Ascending aorta (tissue), 2 donors: ENCODE measurements at regions of chr18 and their contacts with region 1.

Region 1: DNA sequence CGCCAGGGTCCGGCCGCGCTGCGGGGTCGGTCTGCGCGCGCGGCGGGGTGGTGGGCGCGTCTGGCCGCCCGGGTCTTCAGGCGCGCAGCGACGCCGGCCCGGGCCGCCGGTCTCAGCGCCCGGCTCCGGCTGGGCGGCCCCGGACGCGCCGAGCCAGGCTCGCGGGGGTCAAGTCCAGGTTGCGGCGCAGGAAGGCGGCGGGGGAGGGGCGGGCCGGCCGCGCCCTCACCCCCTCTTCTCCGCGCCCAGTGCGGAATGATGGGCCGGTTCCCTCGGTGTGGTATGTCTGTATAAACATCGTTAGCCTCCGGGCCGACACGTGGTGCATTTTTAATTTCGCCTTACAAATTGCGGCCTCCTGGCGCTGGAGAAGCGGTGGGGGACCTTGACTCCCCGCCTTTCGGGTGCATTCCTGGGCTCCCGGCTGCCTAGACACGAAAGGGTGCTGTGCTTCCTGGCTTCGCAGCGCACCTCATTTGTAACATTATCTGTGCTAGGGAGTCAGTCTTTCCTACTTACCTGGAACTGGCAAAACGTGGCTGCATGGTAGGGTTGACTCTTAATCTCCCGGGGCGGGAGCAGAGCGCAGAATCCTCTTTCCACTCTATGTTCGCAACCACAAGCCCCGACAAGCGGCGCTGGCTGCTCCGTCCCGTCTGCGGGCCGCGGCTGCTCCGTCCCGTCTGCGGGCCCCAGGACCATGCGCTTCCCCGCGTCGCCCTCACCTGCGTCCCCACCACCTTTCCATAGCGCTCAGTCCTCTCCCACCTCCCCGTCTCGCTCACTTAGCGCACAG is 69.0 kb downstream of the CTAGE1 start:
- DNase-seq: peak in 1 of 2 donors; percentile 83
- H3K4me3 ChIP-seq: peak overlapping the region; percentile 54 to 66
- H3K27ac ChIP-seq: peak overlapping the region; percentile 93 to 97
- H3K4me1 ChIP-seq: peaks cover 7 to 21% of the 10 kb centered on the region in 2 donors
- H3K27me3 ChIP-seq: no peaks in the 10 kb centered on the region
- CTCF ChIP-seq: no peak

Region 2: GRCh38 chr18:22214731-22215528 is 133.8 kb before region 1 on chr18:
- intact Hi-C with region 1: loop called (anchors 5 kb)
- DNase-seq: no peak
- H3K4me3 ChIP-seq: no peak overlapping the region
- H3K27ac ChIP-seq: no peak overlapping the region
- H3K4me1 ChIP-seq: peaks cover 8 to 19% of the 10 kb centered on the region in 2 donors
- H3K27me3 ChIP-seq: no peaks in the 10 kb centered on the region
- CTCF ChIP-seq: no peak

Region 3: GRCh38 chr18:22422909-22423548 is 74.3 kb after region 1 on chr18:
- intact Hi-C with region 1: loop called (anchors 2 kb)
- DNase-seq: peak in 1 of 2 donors; percentile 80
- H3K4me3 ChIP-seq: no peak overlapping the region
- H3K27ac ChIP-seq: peak overlapping the region; percentile 71
- H3K4me1 ChIP-seq: peaks cover 8 to 26% of the 10 kb centered on the region in 2 donors
- H3K27me3 ChIP-seq: no peaks in the 10 kb centered on the region
- CTCF ChIP-seq: no peak

Region 4: DNA sequence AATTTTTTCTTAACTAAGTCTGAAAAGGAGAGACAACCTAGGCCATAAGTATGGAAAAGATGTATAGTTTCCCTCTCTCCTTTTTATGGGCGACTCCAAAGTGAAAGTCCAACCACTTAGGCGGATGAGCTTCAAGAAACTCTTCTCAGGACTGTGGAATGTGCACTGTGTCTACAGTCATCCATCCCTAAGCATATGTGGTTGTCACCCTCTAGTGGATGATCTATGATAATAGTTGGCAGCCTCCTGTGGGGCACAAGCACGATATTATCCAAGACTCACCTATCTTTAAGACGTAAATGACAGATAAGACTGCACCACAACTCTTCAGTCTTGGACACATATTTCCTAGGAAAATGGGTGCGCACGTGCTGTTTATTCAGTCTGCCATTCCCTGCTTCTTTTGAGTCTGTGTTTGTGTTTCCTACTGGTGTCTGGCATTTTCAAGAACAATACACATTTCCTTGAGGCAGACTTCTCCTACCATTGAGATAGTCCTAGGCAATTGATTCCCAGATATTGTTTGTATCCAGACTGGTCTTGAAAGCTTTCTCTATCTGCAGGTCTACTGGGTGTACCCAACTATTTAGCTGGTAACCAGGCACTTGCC is 214.5 kb after region 1 on chr18:
- intact Hi-C with region 1: loop called (anchors 2 kb)
- DNase-seq: peak in 1 of 2 donors; percentile 74
- H3K4me3 ChIP-seq: peak overlapping the region; percentile 21 to 57
- H3K27ac ChIP-seq: peak overlapping the region; percentile 92 to 99
- H3K4me1 ChIP-seq: peaks cover 0 to 16% of the 10 kb centered on the region in 2 donors
- H3K27me3 ChIP-seq: no peaks in the 10 kb centered on the region
- CTCF ChIP-seq: peak; percentile 62 to 84 (median 79)